Activated CD4-positive, alpha-beta memory T cell treated with anti-CD3 and anti-CD28 coated beads for 36 hours (primary cell): ENCODE measurements at regions of chr17 and their contacts with region 1.

Region 1: DNA sequence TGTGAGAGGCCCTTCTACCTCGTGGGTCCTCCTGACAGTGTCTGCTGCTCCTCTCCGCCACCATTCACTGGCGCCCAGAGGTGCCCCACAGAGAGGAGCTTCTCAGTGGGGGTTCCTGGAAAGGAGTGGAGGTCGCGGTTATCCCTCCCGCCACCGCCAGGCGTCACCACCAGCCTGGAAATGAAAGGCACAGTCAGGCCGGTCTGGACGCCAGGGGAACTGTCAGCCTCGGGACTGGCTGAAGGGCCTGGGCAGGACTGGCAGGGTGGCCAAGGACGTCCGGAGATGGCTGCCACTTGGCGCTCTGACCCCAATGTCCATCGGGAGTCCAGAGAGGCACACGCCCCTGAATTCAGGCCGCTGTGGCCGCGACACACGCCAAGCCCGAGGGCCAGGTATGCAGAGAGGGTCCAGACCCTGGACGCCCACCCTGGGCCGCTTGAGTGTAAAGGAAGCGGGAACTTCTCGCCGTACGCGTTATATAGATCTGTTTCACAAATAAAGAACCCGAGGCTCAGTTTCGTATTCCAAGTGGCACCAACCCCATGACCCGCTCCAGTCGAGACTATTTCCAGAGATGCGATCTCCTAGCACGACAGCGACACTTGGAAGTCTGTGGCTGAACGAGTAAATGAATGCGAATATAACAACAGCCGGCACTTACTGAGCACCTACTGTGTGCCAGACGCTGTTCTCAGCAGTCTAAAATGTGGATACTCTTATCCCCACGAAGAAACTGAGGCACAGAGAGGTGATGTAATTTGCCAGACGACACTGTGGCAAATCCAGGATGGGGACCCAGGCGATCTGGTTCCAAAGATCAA is 7.6 kb upstream of the NXPH3 start:
- DNase-seq: peak; percentile 90
- H3K4me3 Mint-ChIP-seq: peak overlapping the region; percentile 67
- H3K27ac Mint-ChIP-seq: no peak overlapping the region
- H3K4me1 Mint-ChIP-seq: peaks cover 16% of the 10 kb centered on the region
- H3K27me3 Mint-ChIP-seq: peaks cover 14% of the 10 kb centered on the region

Region 2: DNA sequence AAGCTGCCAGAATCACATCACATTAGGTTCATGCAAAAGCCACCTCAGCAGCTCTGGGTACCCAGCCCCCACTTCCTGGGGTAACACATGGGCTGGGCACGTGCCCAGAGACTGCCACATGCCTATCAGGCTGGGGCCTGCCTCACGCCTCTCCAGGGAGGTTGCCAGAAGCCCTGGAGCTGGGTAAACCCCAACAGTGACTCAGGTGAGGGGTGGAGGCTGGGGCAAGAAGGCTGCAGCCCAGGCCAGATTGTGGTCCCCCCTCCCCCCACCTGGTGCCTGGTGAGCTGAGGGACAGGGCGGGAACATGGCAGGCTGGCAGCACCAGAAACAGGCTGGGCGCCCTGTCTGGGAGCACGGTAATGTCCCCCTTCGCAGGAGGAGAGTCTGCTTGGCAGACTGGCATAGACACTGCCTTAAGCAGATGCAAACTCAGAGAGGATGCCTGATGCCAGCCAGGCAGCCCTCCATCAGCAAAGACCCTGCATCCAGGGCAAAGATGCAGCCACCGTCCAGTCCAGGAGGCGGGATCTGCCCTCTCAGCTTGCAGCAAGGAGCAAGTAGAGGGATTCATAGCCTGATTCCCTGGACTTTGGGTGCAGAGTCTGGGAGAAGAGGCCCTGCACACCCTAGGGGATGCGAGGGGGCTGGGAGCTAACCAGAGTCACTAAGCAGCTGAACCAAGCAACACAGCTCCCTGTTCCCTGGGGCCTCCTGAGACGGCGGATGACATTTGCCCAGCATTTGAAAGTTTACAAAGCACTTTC is 44.2 kb before region 1 on chr17:
- CTCF ChIA-PET with region 1: no interaction called
- POLR2A ChIA-PET with region 1: no interaction called
- intact Hi-C with region 1: no loop called
- DNase-seq: peak; percentile 77
- H3K4me3 Mint-ChIP-seq: no peak overlapping the region
- H3K27ac Mint-ChIP-seq: no peak overlapping the region
- H3K4me1 Mint-ChIP-seq: peaks cover 11% of the 10 kb centered on the region
- H3K27me3 Mint-ChIP-seq: no peaks in the 10 kb centered on the region

Region 3: DNA sequence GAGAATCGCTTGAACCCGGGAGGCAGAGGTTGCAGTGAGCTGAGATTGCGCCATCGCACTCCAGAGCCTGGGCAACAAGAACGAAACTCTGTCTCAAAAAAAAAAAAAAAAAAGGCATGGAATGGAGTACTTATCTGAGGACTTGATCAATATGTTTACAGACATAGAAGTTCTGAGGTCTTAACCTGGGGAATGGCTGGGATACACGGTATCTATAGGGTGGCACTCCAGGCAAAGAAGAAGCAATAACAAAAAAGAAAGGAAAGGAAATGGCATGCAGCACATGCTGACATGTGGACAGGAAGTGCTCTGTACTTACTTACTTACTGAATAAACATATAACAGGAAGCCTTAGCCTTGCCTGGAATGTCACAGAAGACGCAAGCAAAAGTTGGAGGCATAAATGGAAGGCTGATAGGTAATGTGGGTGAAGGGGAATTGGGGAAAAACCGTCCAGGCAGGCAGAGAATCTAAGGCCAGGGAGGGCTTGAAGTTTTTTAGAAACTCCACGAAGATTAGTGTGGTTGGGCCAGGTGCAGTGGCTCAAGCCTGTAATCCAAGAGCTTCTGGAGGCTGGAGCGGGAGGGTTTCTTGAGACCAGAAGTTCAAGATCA is 119.9 kb after region 1 on chr17:
- CTCF ChIA-PET with region 1: interaction called, 564 read pairs
- POLR2A ChIA-PET with region 1: no interaction called
- intact Hi-C with region 1: no loop called
- DNase-seq: peak; percentile 31
- H3K4me3 Mint-ChIP-seq: peak overlapping the region; percentile 45
- H3K27ac Mint-ChIP-seq: peak overlapping the region; percentile 88
- H3K4me1 Mint-ChIP-seq: peaks cover 32% of the 10 kb centered on the region
- H3K27me3 Mint-ChIP-seq: no peaks in the 10 kb centered on the region

Region 4: DNA sequence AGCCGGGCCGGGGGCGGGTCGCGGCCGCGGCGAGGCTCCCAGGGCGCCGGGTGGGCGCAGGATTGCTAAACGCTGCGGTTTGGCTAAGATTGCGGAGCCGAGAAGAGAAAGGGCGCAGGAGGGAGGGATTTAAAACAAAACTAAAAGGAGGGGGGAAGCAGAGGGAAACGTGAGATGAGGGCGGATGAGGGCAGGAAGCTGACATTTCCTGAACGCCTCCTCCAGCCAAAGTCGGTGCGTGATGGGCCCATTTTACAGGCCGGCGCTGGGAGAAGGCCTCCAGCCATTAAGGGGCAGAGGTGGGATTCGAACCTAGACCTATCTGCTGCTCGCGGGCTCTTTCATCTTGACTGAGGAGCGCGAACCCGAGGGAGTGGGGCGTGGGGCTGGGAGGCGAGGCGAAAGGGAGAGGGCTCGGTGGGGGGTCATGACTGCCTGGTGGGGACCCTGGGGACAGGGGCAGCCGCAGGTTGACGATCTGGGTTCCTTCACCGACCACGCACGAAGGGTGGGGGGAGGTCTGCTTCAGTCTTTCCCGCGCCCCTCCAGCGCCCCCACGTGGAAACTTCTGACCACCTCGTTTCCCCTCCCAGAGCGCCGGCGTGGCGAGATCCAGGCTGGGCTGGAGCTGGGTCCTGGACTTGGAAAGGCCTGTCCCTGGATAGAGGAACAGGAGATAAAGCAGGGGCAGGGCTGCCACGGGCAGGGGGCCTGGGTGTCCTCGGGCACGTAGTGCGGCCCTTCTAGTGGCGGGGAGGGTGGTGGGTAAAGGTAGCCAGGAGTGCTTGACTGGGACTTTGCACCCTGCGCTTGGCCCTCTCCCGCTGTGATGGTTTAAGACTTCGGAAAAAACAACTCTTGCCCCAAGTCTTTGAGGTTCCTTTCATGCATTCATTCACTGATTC is 283.6 kb after region 1 on chr17:
- CTCF ChIA-PET with region 1: interaction called, 10 read pairs
- POLR2A ChIA-PET with region 1: no interaction called
- intact Hi-C with region 1: loop called (anchors 5 kb)
- DNase-seq: peak; percentile 76
- H3K4me3 Mint-ChIP-seq: peak overlapping the region; percentile 76
- H3K27ac Mint-ChIP-seq: peak overlapping the region; percentile 73
- H3K4me1 Mint-ChIP-seq: peaks cover 9% of the 10 kb centered on the region
- H3K27me3 Mint-ChIP-seq: no peaks in the 10 kb centered on the region